ENCODE measurements at regions of chr19 and their contacts with region 1.

Region 1: DNA sequence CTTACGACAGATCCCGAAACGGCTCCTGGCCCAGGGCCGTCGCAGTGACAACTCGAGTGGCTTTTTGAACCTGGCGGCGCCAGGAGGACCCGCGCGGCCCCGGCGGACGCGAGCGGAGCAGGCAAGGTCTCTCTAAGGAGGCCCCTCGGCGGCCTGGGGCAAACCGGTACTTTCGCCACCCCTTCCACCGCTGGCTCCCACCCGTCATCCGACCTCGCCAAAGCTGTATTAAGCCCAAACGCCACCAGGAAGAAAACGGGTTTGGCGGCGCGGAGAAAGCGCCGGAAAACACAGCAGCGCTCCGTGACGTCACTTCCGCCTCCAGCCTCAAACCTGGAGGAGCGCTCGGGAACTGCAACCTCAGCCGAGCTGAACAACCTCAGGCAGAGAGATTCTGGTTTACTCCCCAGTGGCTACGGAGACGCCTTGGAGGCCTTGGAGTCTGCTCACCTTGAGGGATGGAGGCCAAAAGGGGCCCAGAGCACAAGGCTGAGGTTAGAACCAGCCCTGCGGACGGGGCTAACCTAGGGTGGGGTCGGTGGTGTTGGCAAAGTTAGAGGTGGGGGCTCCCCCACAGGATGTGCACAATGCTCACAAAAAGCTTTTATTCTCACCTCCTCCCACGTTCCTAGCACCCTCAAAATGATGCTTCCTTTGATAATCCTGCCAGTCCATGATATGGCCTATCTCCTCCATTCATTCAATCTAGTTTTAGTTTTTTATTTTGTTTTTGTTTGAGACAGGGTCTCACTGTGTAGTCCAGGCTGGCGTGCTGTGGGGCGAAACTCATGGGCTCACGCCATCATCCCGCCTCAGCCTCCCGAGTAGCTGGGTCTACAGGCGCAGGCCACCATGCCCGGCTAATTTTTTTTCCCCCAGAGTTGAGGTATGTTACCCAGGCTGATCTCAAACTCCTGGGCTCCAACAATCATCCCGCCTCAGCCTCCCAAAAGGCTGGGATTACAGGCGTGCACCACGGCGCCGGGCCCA is at the start of gene ZNF266:
- DNase-seq: peak; percentile 87 to 97 (median 93)
- ATAC-seq: peak; percentile 87
- H3K4me3 ChIP-seq: peak within 1 kb of the TSS; percentile 80 to 95
- H3K4me3 Mint-ChIP-seq: peak within 1 kb of the TSS; percentile 93
- H3K27ac ChIP-seq: peak within 1 kb of the TSS; percentile 81 to 98
- H3K27ac Mint-ChIP-seq: peak within 1 kb of the TSS; percentile 98
- H3K4me1 ChIP-seq: peaks cover 31% of the 10 kb centered on the region
- H3K4me1 Mint-ChIP-seq: peaks cover 56% of the 10 kb centered on the region
- H3K27me3 ChIP-seq: no peaks in the 10 kb centered on the region
- H3K27me3 Mint-ChIP-seq: no peaks in the 10 kb centered on the region
- CTCF ChIP-seq: peak; percentile 67
- total RNA-seq, gene ZNF266: 62.2 to 65.3 TPM

Region 2: DNA sequence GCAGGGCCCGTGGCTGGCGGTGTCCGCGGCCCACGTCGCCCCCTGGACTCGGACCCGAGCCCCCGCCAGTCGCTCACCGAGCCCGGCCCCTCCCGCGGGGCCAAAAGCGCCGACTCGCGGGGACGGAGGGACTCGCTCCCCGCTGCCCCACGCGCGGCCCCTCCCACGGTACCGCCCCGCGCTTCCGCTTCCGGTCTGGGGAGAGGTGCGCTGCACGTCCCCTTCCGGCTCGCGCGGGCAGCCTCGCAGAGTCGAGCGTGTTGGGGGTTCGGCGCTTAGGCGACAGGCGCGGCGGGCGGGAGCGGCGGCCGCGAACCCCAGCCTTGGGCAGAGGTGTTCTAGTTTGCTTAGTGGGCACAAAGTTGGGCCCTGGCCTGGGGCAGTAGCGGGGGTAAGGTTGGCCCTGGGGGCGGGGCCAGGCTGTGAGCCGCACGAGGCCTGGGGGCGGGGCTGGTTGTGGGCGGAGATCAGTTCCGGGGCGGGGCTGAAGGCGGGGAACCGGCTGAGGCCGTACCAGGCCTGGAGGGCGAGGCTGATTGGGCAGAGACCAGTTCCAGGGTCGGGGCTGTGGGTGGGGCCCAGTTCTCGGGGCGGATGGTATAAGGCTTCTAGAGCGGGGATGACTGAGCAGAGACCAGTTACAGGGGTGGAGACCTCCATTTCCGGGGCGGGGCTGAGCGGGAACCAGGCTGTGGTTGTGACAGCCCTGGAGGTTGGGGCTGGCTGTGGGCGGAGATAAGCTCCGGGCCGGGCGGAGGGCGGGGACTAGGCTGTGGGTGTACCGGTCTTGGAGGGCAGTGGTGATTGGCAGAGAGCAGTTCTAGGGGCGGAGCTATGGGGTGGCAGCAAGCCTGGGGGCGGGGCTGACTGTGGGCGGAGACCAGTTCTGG is 603.2 kb before region 1 on chr19 and contains the starts of genes MBD3L1 and ZNF558:
- CTCF ChIA-PET with region 1: no interaction called
- POLR2A ChIA-PET with region 1: no interaction called
- intact Hi-C with region 1: loop called in 1 of 2 experiments (anchors 10 kb)
- DNase-seq: peak; percentile 97 to 100 (median 99)
- ATAC-seq: peak; percentile 89
- H3K4me3 ChIP-seq: peak within 1 kb of the TSS; percentile 86 to 93
- H3K4me3 Mint-ChIP-seq: peak within 1 kb of the TSS; percentile 92
- H3K27ac ChIP-seq: peak within 1 kb of the TSS; percentile 91
- H3K27ac Mint-ChIP-seq: peak within 1 kb of the TSS; percentile 96
- H3K4me1 ChIP-seq: peaks cover 13% of the 10 kb centered on the region
- H3K4me1 Mint-ChIP-seq: peaks cover 27% of the 10 kb centered on the region
- H3K27me3 ChIP-seq: no peaks in the 10 kb centered on the region
- H3K27me3 Mint-ChIP-seq: no peaks in the 10 kb centered on the region
- CTCF ChIP-seq: no peak
- total RNA-seq, gene MBD3L1: not detected
- total RNA-seq, gene ZNF558: 28.1 to 32.9 TPM

Region 3: DNA sequence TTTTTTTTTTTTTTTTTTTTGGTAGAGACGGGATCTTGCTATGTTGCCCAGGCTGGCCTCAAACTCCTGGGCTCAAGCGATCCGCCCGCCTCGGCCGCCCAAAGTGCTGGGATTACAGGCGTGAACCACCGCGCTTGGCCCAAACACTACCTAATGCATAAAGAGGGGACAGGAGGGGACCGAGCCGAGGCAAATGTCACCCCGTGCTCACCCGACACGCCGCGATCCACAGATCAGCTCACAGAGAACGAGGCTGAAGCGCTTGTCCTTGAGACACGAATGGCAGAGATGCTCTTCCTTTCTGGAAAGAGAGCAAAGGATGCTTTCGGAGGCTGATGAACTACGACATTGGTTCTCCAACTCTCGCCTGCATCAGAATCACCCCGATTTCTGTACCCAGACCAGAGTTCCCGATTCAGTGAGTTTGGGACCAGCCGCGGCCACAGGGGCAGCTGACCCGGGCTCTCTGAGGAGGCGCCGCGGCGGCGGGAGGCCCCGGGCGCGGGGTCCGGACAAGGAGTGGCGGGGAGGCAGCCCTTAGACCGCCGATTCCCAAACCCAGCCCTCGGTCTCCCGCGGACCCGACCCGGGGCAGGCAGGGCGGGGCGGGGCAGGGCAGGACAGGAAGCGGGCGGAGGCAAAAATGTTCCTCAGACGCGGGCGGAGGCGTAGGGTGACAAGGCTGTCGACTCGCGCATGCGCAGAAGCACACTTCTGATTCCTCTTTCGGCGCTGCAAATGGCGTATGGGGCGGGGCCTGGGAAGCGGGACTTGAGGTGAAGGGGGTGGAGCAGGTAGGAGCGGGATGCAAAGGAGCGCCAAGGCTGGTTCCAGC is 126.2 kb before region 1 on chr19 and contains the start of gene ZNF699:
- CTCF ChIA-PET with region 1: interaction called, 4 read pairs
- POLR2A ChIA-PET with region 1: interaction called, 4 read pairs
- intact Hi-C with region 1: loop called (anchors 1 kb)
- DNase-seq: peak; percentile 96 to 99 (median 98)
- ATAC-seq: peak; percentile 90
- H3K4me3 ChIP-seq: peak within 1 kb of the TSS; percentile 86 to 100
- H3K4me3 Mint-ChIP-seq: peak within 1 kb of the TSS; percentile 94
- H3K27ac ChIP-seq: peak within 1 kb of the TSS; percentile 86
- H3K27ac Mint-ChIP-seq: peak within 1 kb of the TSS; percentile 96
- H3K4me1 ChIP-seq: peaks cover 13% of the 10 kb centered on the region
- H3K4me1 Mint-ChIP-seq: peaks cover 34% of the 10 kb centered on the region
- H3K27me3 ChIP-seq: no peaks in the 10 kb centered on the region
- H3K27me3 Mint-ChIP-seq: no peaks in the 10 kb centered on the region
- CTCF ChIP-seq: no peak
- total RNA-seq, gene ZNF699: 15.1 to 16.0 TPM

Region 4: DNA sequence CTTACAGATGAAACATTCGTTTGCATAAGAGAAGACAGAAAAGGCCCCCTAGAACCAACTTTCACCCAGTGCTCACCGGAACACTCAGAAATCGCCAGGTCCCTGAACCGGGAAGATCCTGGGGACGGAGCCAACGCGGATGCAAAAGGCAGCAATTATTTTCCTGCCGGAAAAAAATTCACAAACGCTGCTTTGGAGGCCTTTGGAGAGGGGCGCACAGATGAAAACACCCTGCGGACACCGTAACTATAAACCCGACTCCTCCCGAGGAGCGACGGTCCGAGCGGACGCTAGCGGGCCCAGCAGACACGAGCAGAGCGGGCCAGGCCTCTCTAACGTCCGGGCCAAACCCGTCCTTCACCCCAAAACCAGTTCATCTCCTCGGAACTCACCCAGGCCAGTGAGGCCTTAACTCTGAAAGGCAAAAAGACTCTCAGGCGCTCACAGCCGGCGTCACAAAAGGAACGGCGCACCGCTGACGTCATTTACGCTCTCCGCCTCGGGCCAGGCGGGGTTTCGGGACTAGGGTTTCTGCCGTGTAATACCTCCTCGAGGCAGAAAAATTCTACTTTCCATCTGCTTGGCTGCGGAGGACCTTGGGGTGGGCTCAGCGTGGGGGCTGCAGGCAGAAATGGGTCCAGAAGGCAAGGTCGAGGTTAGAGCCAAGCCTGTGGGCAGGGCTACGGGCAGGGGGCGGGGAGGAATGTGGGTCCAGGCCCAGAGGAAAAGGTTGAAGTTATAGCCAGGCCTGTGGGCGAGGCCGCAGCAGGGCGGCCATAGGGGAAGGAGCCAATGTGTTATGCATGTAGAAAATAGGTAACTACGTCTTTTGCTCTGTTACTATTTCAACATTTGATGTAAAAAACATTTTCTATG is 102.8 kb after region 1 on chr19 and contains the start of gene ZNF426:
- CTCF ChIA-PET with region 1: no interaction called
- POLR2A ChIA-PET with region 1: interaction called, 4 read pairs
- intact Hi-C with region 1: loop called (anchors 1 kb)
- DNase-seq: peak; percentile 77 to 92 (median 86)
- ATAC-seq: peak; percentile 94
- H3K4me3 ChIP-seq: peak within 1 kb of the TSS; percentile 89 to 93
- H3K4me3 Mint-ChIP-seq: peak within 1 kb of the TSS; percentile 99
- H3K27ac ChIP-seq: peak within 1 kb of the TSS; percentile 91
- H3K27ac Mint-ChIP-seq: peak within 1 kb of the TSS; percentile 100
- H3K4me1 ChIP-seq: peaks cover 17% of the 10 kb centered on the region
- H3K4me1 Mint-ChIP-seq: peaks cover 35% of the 10 kb centered on the region
- H3K27me3 ChIP-seq: no peaks in the 10 kb centered on the region
- H3K27me3 Mint-ChIP-seq: no peaks in the 10 kb centered on the region
- CTCF ChIP-seq: no peak
- total RNA-seq, gene ZNF426: 16.6 to 17.9 TPM

Region 5: GRCh38 chr19:9621156-9622037 is 185.8 kb after region 1 on chr19 and contains the start of gene ZNF561:
- CTCF ChIA-PET with region 1: no interaction called
- POLR2A ChIA-PET with region 1: no interaction called
- intact Hi-C with region 1: loop called in 1 of 2 experiments (anchors 5 kb)
- DNase-seq: peak; percentile 77 to 97 (median 91)
- ATAC-seq: peak; percentile 85
- H3K4me3 ChIP-seq: peak within 1 kb of the TSS; percentile 81 to 97
- H3K4me3 Mint-ChIP-seq: peak within 1 kb of the TSS; percentile 95
- H3K27ac ChIP-seq: peak within 1 kb of the TSS; percentile 91 to 94
- H3K27ac Mint-ChIP-seq: peak within 1 kb of the TSS; percentile 99
- H3K4me1 ChIP-seq: peaks cover 15% of the 10 kb centered on the region
- H3K4me1 Mint-ChIP-seq: peaks cover 27% of the 10 kb centered on the region
- H3K27me3 ChIP-seq: no peaks in the 10 kb centered on the region
- H3K27me3 Mint-ChIP-seq: no peaks in the 10 kb centered on the region
- CTCF ChIP-seq: no peak
- total RNA-seq, gene ZNF561: 35.5 to 39.8 TPM

Region 6: DNA sequence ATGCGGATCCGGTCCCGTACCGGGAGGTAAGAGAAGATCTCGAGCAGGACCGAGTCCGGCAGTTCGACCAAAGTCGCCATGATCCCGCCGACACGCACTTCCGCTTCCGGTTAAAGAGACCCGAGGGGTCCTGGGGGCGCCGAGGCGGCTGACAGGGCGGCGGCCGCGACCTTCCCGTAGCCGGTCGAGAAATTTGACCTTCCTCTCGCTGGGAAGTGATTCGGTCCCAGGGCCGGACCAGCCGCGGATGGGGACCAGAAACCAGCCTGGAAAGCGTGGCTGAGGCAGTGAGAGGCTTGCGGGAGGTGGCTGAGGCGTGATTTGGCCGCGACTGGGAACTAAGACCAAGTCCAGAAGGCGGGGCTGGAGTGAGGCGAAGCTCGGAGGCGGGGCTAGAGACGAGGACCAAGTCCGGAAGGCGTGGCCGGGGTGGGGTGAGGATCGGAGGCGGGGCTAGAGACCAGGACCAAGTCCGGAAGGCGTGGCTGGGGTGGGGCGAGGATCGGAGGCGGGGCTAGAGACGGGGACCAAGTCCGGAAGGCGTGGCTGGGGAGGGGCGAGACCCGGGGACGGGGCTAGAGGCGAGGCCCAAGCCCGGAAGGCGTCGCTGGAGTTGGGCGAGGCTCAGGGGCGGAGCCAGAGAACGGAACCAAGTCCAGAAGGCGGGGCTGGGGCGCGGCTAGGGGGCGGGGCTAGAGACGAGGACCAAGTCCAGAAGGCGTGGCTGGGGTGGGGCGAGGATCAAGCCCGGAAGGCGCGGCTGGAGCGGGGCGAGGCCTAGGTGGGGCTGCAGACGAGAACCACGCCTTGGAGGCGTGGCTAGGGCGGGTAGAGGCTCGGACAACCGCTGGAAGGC is 383.4 kb after region 1 on chr19 and contains the start of gene FBXL12:
- CTCF ChIA-PET with region 1: no interaction called
- POLR2A ChIA-PET with region 1: no interaction called
- intact Hi-C with region 1: loop called in 1 of 2 experiments (anchors 5 kb)
- DNase-seq: peak; percentile 100
- ATAC-seq: peak; percentile 89
- H3K4me3 ChIP-seq: peak within 1 kb of the TSS; percentile 97 to 100
- H3K4me3 Mint-ChIP-seq: peak within 1 kb of the TSS; percentile 88
- H3K27ac ChIP-seq: peak within 1 kb of the TSS; percentile 98 to 99
- H3K27ac Mint-ChIP-seq: peak within 1 kb of the TSS; percentile 93
- H3K4me1 ChIP-seq: peaks cover 18% of the 10 kb centered on the region
- H3K4me1 Mint-ChIP-seq: peaks cover 38% of the 10 kb centered on the region
- H3K27me3 ChIP-seq: no peaks in the 10 kb centered on the region
- H3K27me3 Mint-ChIP-seq: no peaks in the 10 kb centered on the region
- CTCF ChIP-seq: no peak
- total RNA-seq, gene FBXL12: 38.9 to 41.3 TPM